ENCODE measurements at regions of chr3 and their contacts with region 1.

Region 1: DNA sequence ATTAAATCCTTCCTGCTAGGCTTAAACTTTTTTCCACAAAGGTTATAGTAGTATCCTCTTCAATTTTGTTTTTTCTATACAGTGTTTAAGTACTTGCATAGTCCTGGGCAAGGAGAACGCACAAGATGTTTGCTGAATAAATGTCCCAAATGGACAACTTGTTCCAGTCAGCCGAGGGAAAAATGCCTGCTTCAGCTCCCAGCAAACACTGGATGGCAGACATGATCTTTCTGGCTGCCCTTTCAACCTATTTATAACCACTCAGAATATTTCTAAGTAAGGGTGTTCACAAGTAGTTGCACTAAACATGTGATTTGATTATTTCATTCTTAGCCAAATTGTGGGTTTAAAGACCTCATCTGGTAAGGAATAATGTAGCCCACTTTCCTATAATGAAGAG is 29.8 kb downstream of the GNB4 start:
- DNase-seq: no peak
- H3K4me3 ChIP-seq: no peak overlapping the region
- H3K27me3 ChIP-seq: no peaks in the 10 kb centered on the region
- CTCF ChIP-seq: peak; percentile 47

Region 2: DNA sequence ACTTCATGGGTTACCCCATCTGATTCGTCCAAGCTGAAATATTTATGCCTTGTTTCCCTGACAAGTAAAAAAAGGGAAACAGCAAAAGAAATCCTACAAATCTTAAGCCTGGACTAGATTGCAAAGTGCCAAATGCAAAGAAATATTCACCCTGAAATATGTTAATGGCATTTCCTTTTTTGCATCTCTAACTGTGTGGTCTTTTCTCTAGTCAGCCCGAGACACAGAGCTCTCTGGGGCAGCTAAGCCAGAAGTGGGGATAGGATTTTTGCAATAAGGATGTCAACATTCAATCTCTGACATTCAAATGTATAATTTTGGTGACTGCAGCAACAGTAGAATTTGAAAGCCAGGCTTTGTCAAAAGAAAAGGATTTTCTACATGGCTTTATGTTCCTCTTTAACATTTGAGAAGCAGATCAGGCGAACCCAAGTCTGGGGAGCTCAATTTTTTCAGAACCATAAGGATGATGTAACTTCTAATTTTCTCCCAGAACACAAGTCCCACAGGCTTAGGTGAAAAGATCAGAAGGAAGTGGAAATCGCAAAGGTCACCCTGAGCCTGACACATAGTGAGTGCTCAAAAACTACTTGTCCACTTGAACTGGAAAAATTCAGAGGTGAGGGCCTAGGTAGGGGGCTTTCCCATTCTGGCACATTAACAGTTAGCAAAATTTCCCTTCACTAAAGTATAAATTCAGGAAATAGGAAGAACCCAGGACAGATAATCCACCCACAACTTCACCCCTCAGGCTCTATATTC is 142.4 kb before region 1 on chr3:
- CTCF ChIA-PET with region 1: no interaction called
- POLR2A ChIA-PET with region 1: interaction called, 10 read pairs
- DNase-seq: no peak
- H3K4me3 ChIP-seq: no peak overlapping the region
- H3K27me3 ChIP-seq: no peaks in the 10 kb centered on the region
- CTCF ChIP-seq: no peak

Region 3: DNA sequence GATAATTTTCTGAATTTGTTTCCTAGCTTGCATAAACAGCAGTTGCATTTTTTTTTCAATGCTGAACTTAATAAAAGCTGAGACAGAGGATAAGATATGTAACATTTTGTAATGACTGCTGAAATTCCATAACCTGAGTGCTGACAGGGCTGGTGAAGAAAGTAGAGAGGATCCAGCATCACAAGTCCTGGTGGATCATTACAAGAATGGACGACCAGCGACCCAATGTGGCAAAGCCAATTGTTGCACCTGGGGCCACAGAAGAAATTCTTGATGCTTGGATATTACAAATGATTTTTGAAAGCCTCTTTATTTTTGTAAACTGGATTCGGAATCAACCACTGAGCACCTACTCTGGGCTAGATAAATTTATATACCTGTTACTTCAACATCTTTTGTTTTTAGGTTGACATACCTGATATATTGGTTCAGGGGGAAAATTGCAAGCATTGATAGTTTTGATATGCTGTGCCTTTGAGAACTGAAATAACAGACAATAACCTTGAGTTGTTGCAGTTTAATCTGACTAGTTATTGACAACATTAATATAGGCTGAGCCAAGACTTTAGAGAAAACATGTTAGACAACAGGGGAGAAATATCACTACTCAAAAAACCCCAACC is 137.4 kb after region 1 on chr3:
- CTCF ChIA-PET with region 1: interaction called, 11 read pairs
- POLR2A ChIA-PET with region 1: no interaction called
- DNase-seq: no peak
- H3K4me3 ChIP-seq: no peak overlapping the region
- H3K27me3 ChIP-seq: no peaks in the 10 kb centered on the region
- CTCF ChIP-seq: peak; percentile 82

Measured in BJ (cell line).